GM12878 (cell line): ENCODE measurements at regions of chr7 and their contacts with region 1.

Region 1: GRCh38 chr7:137839903-137840779 is 6.6 kb downstream of the DGKI start:
- DNase-seq: no peak
- ATAC-seq: 0 out of 3 replicates have a peak, but pooled peaks have one; percentile 11
- H3K4me3 ChIP-seq: no peak overlapping the region
- H3K27ac ChIP-seq: no peak overlapping the region
- H3K4me1 ChIP-seq: no peaks in the 10 kb centered on the region
- H3K27me3 ChIP-seq: peaks cover 0 to 2% of the 10 kb centered on the region in 2 experiments; a peak in 2 of 4 replicates
- CTCF ChIP-seq: no peak
- EP300 ChIP-seq: no peak
- POLR2A ChIP-seq: no peak
- RAD21 ChIP-seq: no peak

Region 2: DNA sequence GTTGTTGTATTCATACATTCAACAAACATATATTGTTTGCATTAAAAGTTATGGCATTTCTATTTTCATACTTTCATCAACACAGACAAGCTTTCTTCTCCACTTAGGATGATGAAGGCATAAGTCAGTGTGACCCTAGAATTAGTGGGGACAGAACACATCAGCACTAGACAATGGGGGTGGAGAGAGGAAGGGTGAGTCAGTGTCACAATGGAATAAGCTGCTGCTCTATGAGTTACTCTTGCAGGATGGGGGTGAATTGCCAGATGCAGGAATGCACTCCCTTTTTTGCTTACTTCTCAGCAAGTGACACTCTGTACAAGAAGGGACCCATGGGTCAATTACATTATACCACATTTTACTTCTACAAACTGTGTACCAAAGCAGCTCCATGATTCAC is 67.4 kb before region 1 on chr7:
- CTCF ChIA-PET with region 1: interaction called, 4 read pairs
- POLR2A ChIA-PET with region 1: interaction called, 6 read pairs
- RAD21 ChIA-PET with region 1: interaction called, 11 read pairs
- SMC1A ChIA-PET with region 1: interaction called, 10 read pairs
- in situ Hi-C with region 1: no loop called
- intact Hi-C with region 1: no loop called
- DNase-seq: no peak
- ATAC-seq: peak; percentile 64
- H3K4me3 ChIP-seq: no peak overlapping the region
- H3K27ac ChIP-seq: no peak overlapping the region
- H3K4me1 ChIP-seq: no peaks in the 10 kb centered on the region
- H3K27me3 ChIP-seq: no peaks in the 10 kb centered on the region
- CTCF ChIP-seq: no peak
- EP300 ChIP-seq: no peak
- POLR2A ChIP-seq: no peak
- RAD21 ChIP-seq: no peak

Region 3: DNA sequence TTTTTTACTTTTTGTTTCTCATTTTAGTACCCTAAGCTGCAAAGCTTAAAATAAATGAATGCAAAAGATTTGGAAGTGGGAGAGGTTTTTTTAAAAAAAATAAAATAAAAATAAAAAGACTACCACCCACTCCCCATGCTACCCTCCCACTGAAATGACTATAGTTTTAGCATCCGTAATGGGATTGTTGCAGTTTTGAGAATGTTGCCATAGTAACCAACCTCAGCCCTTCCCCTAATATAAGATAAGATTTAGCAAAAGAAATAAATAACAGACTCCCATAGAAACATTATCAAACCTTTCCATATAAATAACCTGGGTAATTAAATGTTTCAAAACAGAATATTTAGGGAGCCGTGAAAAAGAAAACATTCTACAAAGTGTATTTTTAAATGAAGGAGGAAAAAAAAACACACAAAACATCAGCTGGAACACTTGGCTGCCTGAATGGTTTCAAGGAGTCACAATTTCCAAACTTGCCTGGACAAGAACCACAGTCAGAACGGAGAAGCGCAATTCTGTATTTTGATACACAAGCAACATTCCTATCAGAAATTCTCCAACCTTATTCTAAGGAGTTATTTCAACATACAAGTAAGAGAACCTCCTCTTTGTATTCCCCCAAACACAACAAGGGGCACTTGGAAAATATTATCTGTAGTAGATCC is 50.8 kb before region 1 on chr7:
- CTCF ChIA-PET with region 1: interaction called, 3 read pairs
- POLR2A ChIA-PET with region 1: interaction called, 3 read pairs
- RAD21 ChIA-PET with region 1: interaction called, 9 read pairs
- SMC1A ChIA-PET with region 1: interaction called, 15 read pairs
- in situ Hi-C with region 1: no loop called
- intact Hi-C with region 1: no loop called
- DNase-seq: no peak
- ATAC-seq: no peak
- H3K4me3 ChIP-seq: no peak overlapping the region
- H3K27ac ChIP-seq: no peak overlapping the region
- H3K4me1 ChIP-seq: no peaks in the 10 kb centered on the region
- H3K27me3 ChIP-seq: no peaks in the 10 kb centered on the region
- CTCF ChIP-seq: no peak
- EP300 ChIP-seq: no peak
- POLR2A ChIP-seq: no peak
- RAD21 ChIP-seq: no peak

Region 4: GRCh38 chr7:137798073-137798763 is 41.9 kb before region 1 on chr7:
- CTCF ChIA-PET with region 1: interaction called, 4 read pairs
- POLR2A ChIA-PET with region 1: no interaction called
- RAD21 ChIA-PET with region 1: interaction called, 4 read pairs
- SMC1A ChIA-PET with region 1: interaction called, 15 read pairs
- in situ Hi-C with region 1: no loop called
- intact Hi-C with region 1: no loop called
- DNase-seq: peak; percentile 59
- ATAC-seq: peak; percentile 96
- H3K4me3 ChIP-seq: no peak overlapping the region
- H3K27ac ChIP-seq: no peak overlapping the region; the same call in 1 of the 2 replicates
- H3K4me1 ChIP-seq: no peaks in the 10 kb centered on the region
- H3K27me3 ChIP-seq: no peaks in the 10 kb centered on the region
- CTCF ChIP-seq: no peak
- EP300 ChIP-seq: peak; percentile 48 to 84; a peak in 3 of 4 replicates
- POLR2A ChIP-seq: no peak
- RAD21 ChIP-seq: no peak

Region 5: DNA sequence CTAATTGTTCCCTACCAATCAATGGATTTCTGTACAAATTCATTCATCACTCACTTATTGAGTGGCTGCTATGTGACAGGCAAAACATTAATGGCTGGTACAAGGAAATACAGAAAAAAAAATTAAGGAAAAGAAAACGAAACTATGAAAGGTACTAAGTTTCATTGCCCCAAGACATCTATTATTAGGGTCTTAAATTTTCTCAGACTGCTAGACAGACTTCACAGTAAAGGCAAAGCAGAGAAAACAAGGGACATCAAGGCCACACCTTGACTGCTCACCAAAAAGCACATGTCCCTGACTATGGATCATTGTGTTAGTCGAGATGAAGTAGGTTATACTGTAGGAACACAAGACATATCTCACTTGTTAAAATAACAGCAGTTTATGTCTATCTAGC is 29.9 kb before region 1 on chr7:
- CTCF ChIA-PET with region 1: interaction called, 20 read pairs
- POLR2A ChIA-PET with region 1: interaction called, 6 read pairs
- RAD21 ChIA-PET with region 1: interaction called, 5 read pairs
- SMC1A ChIA-PET with region 1: interaction called, 14 read pairs
- in situ Hi-C with region 1: no loop called
- intact Hi-C with region 1: no loop called
- DNase-seq: no peak
- ATAC-seq: peak; percentile 31
- H3K4me3 ChIP-seq: no peak overlapping the region
- H3K27ac ChIP-seq: no peak overlapping the region
- H3K4me1 ChIP-seq: peaks cover 3% of the 10 kb centered on the region; the same call in 1 of the 2 replicates
- H3K27me3 ChIP-seq: no peaks in the 10 kb centered on the region
- CTCF ChIP-seq: no peak
- EP300 ChIP-seq: no peak
- POLR2A ChIP-seq: no peak
- RAD21 ChIP-seq: no peak

Region 6: GRCh38 chr7:138089080-138089991 is 249.2 kb after region 1 on chr7:
- CTCF ChIA-PET with region 1: no interaction called
- POLR2A ChIA-PET with region 1: no interaction called
- RAD21 ChIA-PET with region 1: no interaction called
- SMC1A ChIA-PET with region 1: no interaction called
- in situ Hi-C with region 1: no loop called
- intact Hi-C with region 1: no loop called
- DNase-seq: no peak
- ATAC-seq: no peak
- H3K4me3 ChIP-seq: no peak overlapping the region
- H3K27ac ChIP-seq: no peak overlapping the region
- H3K4me1 ChIP-seq: peaks cover 6% of the 10 kb centered on the region
- H3K27me3 ChIP-seq: no peaks in the 10 kb centered on the region
- CTCF ChIP-seq: no peak
- EP300 ChIP-seq: no peak
- POLR2A ChIP-seq: no peak
- RAD21 ChIP-seq: no peak